ENCODE measurements at regions of chr17 and their contacts with region 1.

Region 1: GRCh38 chr17:82020891-82021727 is 1.6 kb downstream of the CENPX start:
- H3K4me3 Mint-ChIP-seq: peak overlapping the region; percentile 84
- H3K27ac Mint-ChIP-seq: peak overlapping the region; percentile 80
- H3K4me1 Mint-ChIP-seq: peaks cover 38% of the 10 kb centered on the region
- H3K27me3 Mint-ChIP-seq: no peaks in the 10 kb centered on the region

Region 2: DNA sequence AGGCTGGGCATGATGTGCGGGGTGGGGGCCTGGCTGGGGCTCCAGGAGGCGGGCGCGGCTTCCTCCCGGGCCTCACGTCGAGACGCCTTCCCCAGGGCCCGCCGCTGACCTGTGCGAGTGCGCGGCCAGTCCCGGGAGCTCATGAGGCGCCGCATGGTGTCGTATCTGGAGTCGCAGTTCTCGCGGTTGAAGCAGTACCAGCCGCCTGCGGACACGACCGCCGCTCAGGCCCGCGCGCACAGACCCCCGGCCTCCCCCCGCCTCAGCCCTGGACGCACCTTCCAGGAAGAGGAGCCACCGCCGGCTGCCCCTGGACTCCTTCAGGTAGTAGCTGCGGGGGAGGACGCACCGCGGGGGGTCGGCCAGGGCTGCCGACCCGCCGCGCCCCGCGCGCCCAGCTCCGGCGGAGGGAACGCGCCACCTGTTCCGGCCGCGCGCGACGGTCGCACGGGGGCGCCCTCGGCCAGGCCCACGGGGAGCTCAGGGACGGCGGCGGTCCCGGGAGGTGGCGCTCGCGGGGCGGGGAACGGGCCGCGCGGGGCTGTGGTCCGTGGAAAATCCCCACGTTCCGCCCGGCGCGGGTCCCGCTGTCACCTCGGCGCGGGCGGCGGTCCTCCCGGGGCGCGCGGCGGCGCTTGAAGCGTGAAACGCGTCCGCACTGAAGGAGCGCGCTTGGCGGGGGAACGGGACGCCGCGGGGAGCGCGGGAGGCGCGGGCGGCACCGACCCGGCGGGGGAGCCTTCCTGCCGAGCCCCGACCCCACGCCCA is 61.6 kb before region 1 on chr17:
- intact Hi-C with region 1: loop called (anchors 1 kb)
- H3K4me3 Mint-ChIP-seq: peak overlapping the region; percentile 55
- H3K27ac Mint-ChIP-seq: no peak overlapping the region
- H3K4me1 Mint-ChIP-seq: peaks cover 4% of the 10 kb centered on the region
- H3K27me3 Mint-ChIP-seq: peaks cover 56% of the 10 kb centered on the region

Region 3: GRCh38 chr17:82088838-82089722 is 68.0 kb after region 1 on chr17:
- intact Hi-C with region 1: no loop called
- H3K4me3 Mint-ChIP-seq: no peak overlapping the region
- H3K27ac Mint-ChIP-seq: no peak overlapping the region
- H3K4me1 Mint-ChIP-seq: no peaks in the 10 kb centered on the region
- H3K27me3 Mint-ChIP-seq: no peaks in the 10 kb centered on the region